ENCODE measurements at regions of chr1 and their contacts with region 1.

Region 1: DNA sequence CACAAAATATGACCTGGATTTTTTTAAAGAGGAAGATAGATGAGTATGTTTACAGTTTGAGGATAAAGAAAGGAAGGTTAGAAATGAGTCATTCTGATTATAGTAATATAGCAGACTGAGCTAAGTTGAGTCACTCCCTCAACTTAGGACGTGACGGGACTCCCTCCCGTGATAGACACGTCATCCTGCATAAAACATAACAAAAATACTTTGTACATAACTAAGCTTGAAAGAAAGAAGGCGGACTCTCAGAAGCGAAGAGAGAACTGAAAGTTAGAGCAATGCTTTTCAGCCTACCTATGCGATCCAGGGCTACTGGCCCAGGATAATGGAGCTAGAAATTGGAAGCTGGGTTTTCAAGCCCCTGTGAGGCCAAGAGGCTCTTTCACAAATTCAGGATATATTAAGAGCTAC is 53.0 kb upstream of the DESI2 start:
- DNase-seq: no peak
- ATAC-seq: peak; percentile 75 to 83 (median 80)
- H3K4me3 ChIP-seq: no peak overlapping the region
- H3K27ac ChIP-seq: peak overlapping the region; percentile 56
- H3K4me1 ChIP-seq: no peaks in the 10 kb centered on the region
- H3K27me3 ChIP-seq: no peaks in the 10 kb centered on the region
- CTCF ChIP-seq: no peak

Region 2: DNA sequence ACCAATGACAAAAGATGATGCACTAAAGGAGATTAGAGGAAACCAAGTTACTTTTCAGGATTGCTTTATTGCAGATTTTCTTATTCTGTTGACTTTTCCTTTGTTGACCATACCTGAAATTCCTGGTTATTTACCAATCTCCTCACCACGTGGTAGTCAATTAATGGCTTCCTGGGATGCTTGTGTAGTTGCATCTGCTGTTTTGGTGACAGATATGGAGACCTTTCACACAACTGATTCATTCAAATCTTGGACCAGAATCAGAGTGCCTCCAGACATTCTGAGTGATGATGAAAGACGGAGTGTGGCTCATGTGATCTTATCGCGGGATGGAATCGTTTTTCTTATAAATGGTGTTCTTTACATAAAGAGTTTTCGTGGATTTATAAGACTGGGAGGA is 47.6 kb before region 1 on chr1:
- intact Hi-C with region 1: no loop called
- DNase-seq: no peak
- ATAC-seq: no peak
- H3K4me3 ChIP-seq: no peak overlapping the region
- H3K27ac ChIP-seq: no peak overlapping the region
- H3K4me1 ChIP-seq: no peaks in the 10 kb centered on the region
- H3K27me3 ChIP-seq: no peaks in the 10 kb centered on the region
- CTCF ChIP-seq: no peak

Region 3: GRCh38 chr1:244796718-244797406 is 196.9 kb after region 1 on chr1:
- intact Hi-C with region 1: loop called (anchors 1 to 2 kb)
- DNase-seq: no peak
- ATAC-seq: peak; percentile 63 to 81 (median 69)
- H3K4me3 ChIP-seq: no peak overlapping the region
- H3K27ac ChIP-seq: no peak overlapping the region
- H3K4me1 ChIP-seq: no peaks in the 10 kb centered on the region
- H3K27me3 ChIP-seq: no peaks in the 10 kb centered on the region
- CTCF ChIP-seq: peak; percentile 94

Measured in psoas muscle (tissue), 8 donors.